Ovary (tissue), 10 donors: ENCODE measurements at regions of chr20 and their contacts with region 1.

Region 1: GRCh38 chr20:62143118-62143973 is at the starts of genes PSMA7 and SS18L1:
- DNase-seq: peak; percentile 83 to 90 (median 86)
- H3K4me3 ChIP-seq: peak within 1 kb of the TSS; percentile 68
- H3K27ac ChIP-seq: peak within 1 kb of the TSS; percentile 98 to 100
- H3K4me1 ChIP-seq: peaks cover 14% of the 10 kb centered on the region
- H3K27me3 ChIP-seq: no peaks in the 10 kb centered on the region
- CTCF ChIP-seq: no peak
- EP300 ChIP-seq: no peak
- POLR2A ChIP-seq: peak; percentile 88
- total RNA-seq, gene PSMA7: 163 to 214 (median 168) TPM
- total RNA-seq, gene SS18L1: 9.5 to 14.3 (median 12.4) TPM

Region 2: DNA sequence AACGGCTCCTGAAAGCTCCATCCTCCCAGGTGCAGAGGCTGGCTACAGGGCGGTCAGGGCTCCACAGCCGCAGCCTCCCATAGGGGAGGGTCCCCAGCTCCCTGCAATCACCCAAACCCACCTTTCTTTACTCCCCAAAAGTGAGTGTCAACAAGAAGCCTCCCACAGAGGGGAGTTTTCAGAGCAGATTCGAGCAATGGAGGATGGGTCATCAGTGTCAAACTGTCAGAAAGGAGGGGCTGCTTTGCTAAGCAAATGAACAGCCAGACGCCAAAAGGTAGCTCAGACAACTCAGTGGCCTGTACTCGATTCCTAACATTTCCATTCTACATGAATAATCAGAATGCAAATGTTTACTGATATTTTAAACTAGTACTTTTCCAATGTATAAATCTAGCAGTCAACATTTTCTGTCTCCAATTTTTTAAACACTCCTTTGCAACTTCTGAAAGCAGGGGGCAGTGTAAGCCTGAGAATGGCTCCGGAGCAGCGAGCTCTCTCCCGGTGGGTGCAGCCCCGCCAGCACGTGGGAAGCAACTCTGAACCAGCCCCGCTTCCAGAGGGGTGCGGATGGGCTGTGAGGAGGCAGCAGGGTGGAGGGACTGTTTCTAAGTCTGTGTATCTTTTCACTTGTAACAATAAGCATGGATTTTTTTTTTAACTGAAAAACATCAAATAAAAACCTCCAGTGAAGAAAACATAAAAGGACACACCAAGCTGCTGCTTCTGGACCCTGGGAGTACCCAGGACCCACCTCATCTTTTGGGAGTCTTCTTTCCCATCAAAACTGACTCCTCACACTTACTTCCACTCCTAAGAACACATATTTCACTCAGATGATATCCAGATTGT is 132.6 kb before region 1 on chr20:
- intact Hi-C with region 1: loop called in 2 of 4 experiments (anchors 5 kb)
- DNase-seq: peak; percentile 54 to 72 (median 70)
- H3K4me3 ChIP-seq: no peak overlapping the region
- H3K27ac ChIP-seq: no peak overlapping the region
- H3K4me1 ChIP-seq: peaks cover 2% of the 10 kb centered on the region
- H3K27me3 ChIP-seq: no peaks in the 10 kb centered on the region
- CTCF ChIP-seq: peak; percentile 32 to 68 (median 60)
- EP300 ChIP-seq: no peak
- POLR2A ChIP-seq: no peak

Region 3: DNA sequence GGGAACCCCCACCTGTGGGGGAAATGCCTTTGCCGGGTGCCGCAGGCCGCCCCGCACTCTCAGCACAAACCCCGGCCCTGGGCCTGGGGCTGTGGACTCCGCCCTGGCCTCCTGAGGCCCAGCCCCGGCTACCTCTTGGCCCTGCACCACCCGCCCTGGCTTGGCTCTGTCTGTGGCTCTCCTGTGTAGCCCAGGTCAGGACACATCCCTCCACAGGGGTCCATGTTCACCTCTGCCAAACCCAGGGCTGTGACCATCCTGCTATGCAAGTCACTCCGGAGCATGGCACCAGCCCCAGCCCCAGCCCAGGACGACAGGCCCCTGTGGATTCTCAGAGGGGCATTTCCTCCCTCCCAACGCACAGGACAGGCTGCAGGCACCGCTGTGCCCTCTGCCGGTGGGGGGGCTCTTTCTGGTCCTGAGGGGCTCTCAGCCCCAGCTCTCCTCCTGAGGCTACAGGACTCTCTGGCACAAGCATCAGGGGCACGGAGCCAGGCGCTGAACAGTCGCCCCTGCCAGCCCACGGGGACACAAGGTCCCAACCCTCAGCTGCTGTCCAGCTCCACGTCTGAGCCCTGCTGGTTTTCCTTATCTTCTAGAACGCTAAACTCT is 123.4 kb before region 1 on chr20:
- intact Hi-C with region 1: loop called in 3 of 4 experiments (anchors 5 kb)
- DNase-seq: peak in 4 of 5 donors; percentile 41 to 76 (median 56)
- H3K4me3 ChIP-seq: no peak overlapping the region
- H3K27ac ChIP-seq: peak overlapping the region in 1 of 2 donors; percentile 71
- H3K4me1 ChIP-seq: peaks cover 35% of the 10 kb centered on the region
- H3K27me3 ChIP-seq: no peaks in the 10 kb centered on the region
- CTCF ChIP-seq: no peak
- EP300 ChIP-seq: no peak
- POLR2A ChIP-seq: no peak

Region 4: DNA sequence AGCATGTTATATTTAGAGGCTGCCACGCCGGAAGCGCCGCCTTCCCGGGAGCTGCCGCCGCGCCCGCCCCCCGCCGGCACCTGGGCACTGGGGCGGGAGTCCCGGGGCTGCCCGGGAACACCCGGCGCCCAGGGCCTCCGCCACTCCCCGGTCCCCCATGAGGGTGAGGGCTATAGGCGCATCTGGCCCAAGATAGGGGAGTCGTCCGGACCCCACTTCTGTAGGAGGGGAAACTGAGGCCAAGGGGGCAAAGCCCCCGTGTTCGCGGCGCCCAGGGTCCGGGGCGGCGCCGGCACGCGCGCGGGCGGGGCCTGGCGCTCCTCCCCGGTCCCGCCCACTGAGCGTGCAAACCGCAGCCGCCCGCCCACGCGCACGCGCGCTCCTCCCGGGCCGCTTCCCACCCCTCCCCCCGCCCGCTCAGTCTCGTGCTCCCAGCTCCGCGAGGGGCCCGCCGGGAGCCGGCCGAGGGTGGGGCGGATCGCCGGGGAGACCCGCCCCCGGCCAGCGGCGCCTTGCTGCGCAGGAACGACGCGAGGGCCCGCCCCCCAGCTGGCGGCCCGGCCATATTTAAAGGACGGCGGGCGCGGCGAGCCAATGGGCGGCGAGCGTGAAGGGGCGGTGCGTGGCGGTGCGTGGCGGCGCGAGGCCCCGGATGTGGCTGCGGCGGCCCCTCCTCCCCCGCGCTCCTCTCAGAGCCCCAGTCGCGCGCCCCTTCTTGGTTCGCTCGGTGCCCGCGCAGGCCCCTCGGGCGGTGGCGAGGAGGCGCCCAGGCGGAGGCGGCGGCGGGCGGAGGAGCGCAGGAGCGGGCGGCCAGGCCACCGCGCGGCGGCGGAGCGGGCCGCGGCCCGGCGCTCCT is 21.3 kb before region 1 on chr20 and contains the start of gene LSM14B:
- intact Hi-C with region 1: loop called in 1 of 4 experiments (anchors 2 kb)
- DNase-seq: peak; percentile 96 to 98 (median 96)
- H3K4me3 ChIP-seq: peak within 1 kb of the TSS; percentile 84
- H3K27ac ChIP-seq: peak within 1 kb of the TSS; percentile 90 to 96
- H3K4me1 ChIP-seq: peaks cover 6% of the 10 kb centered on the region
- H3K27me3 ChIP-seq: no peaks in the 10 kb centered on the region
- CTCF ChIP-seq: no peak
- EP300 ChIP-seq: no peak
- POLR2A ChIP-seq: peak; percentile 45
- total RNA-seq, gene LSM14B: 21.5 to 62.2 (median 56.1) TPM